ENCODE measurements at regions of chr3 and their contacts with region 1.

Region 1: DNA sequence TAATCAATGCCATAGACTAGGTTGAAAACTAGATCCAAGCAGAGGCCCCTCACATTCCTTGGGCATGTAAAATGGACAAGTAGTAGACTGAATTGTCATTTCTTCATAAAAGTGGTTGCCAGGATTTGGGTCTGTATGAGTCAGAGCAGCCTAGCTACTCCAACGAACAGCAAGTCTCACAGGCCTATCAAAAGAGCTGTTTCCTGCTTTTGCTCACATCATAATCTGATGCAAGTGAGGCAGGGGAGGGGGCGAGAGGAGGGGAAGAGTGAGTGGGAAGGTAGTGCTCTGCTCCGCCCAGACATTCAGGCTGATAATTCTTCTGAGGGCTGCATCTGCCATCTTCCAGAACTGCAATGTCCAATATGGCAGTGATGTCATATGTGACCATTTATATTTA is 228.9 kb upstream of the PRICKLE2 start:
- DNase-seq: no peak
- ATAC-seq: peak; percentile 23; the same call in 2 of the 3 replicates
- H3K4me3 ChIP-seq: no peak overlapping the region
- H3K27ac ChIP-seq: no peak overlapping the region
- H3K4me1 ChIP-seq: peaks cover 4% of the 10 kb centered on the region; the same call in 1 of the 2 replicates
- H3K27me3 ChIP-seq: no peaks in the 10 kb centered on the region
- CTCF ChIP-seq: no peak
- EP300 ChIP-seq: no peak
- POLR2A ChIP-seq: no peak
- RAD21 ChIP-seq: no peak

Region 2: GRCh38 chr3:64251019-64251418 is 203.2 kb before region 1 on chr3:
- CTCF ChIA-PET with region 1: no interaction called
- POLR2A ChIA-PET with region 1: no interaction called
- RAD21 ChIA-PET with region 1: no interaction called
- SMC1A ChIA-PET with region 1: no interaction called
- in situ Hi-C with region 1: no loop called
- intact Hi-C with region 1: no loop called
- DNase-seq: no peak
- ATAC-seq: no peak
- H3K4me3 ChIP-seq: no peak overlapping the region
- H3K27ac ChIP-seq: no peak overlapping the region
- H3K4me1 ChIP-seq: no peaks in the 10 kb centered on the region
- H3K27me3 ChIP-seq: no peaks in the 10 kb centered on the region
- CTCF ChIP-seq: no peak
- EP300 ChIP-seq: no peak
- POLR2A ChIP-seq: no peak
- RAD21 ChIP-seq: no peak

Region 3: GRCh38 chr3:64365877-64366276 is 88.3 kb before region 1 on chr3:
- CTCF ChIA-PET with region 1: no interaction called
- POLR2A ChIA-PET with region 1: no interaction called
- RAD21 ChIA-PET with region 1: no interaction called
- SMC1A ChIA-PET with region 1: no interaction called
- in situ Hi-C with region 1: no loop called
- intact Hi-C with region 1: no loop called
- DNase-seq: no peak
- ATAC-seq: no peak
- H3K4me3 ChIP-seq: no peak overlapping the region
- H3K27ac ChIP-seq: no peak overlapping the region
- H3K4me1 ChIP-seq: no peaks in the 10 kb centered on the region
- H3K27me3 ChIP-seq: no peaks in the 10 kb centered on the region
- CTCF ChIP-seq: no peak
- EP300 ChIP-seq: no peak
- POLR2A ChIP-seq: no peak
- RAD21 ChIP-seq: no peak

Region 4: DNA sequence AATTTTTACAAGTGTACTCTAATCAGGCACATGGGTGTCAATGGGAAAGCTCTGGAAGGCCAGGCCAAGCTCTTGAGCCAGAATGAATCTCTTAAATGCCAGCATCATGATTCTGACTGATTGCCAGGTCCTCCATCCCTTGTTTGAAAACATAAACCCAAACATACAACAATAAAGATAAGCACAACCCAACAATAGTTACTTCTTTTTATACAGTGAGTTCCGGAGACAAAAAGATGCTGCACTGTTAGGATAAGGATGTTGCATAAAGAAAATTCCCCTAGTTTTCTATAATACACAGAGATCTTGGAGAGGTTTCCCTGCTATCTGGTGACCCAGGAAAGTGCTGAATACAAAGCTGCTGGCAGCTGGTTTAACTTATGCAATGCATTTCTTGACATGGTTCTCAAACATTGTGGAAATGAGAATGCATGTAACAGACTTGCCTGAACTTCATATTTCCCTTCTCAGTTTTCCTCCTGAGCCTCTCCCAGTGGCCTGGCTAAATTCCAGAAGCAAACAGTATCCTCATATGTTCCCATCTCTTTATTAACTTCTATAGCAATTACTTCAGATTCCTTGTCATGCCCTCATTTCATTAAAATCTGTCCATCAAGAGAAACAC is 48.9 kb before region 1 on chr3:
- CTCF ChIA-PET with region 1: interaction called, 9 read pairs
- POLR2A ChIA-PET with region 1: interaction called, 5 read pairs
- RAD21 ChIA-PET with region 1: interaction called, 8 read pairs
- SMC1A ChIA-PET with region 1: interaction called, 13 read pairs
- in situ Hi-C with region 1: no loop called
- intact Hi-C with region 1: no loop called
- DNase-seq: no peak
- ATAC-seq: no peak
- H3K4me3 ChIP-seq: no peak overlapping the region
- H3K27ac ChIP-seq: no peak overlapping the region
- H3K4me1 ChIP-seq: no peaks in the 10 kb centered on the region
- H3K27me3 ChIP-seq: no peaks in the 10 kb centered on the region
- CTCF ChIP-seq: no peak
- EP300 ChIP-seq: no peak
- POLR2A ChIP-seq: no peak
- RAD21 ChIP-seq: no peak

Region 5: DNA sequence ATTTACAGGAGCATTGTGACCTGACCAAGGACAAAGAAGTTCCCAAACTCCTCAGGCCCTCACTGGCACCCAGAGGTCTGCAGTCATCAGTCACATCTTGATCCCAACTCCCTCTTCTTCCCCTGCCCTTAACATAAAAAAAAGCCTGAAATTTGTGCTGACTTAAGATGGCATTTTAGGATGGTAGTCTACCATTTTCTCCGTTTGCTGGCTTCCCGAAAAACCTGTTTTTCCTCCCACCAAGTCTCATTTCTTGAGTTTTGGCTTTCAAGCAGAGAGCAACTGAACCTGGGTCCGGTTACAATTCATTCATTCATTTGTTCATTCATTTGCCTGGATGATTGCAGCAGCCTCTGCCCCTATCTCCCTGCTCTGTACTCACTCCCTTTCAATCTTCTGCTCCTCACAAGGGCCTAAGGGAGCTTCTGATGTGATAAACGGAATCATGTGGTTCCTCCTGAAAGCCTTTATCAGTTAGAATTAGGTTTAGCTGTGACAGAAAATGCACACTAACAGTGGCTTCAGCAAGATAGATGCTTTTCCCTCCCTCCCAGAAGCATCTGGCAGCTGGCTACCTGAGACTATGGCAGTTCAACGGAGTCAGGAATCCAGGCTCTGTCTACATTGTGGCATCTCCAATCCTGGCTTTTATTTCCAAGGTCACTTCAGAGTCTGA is 37.5 kb after region 1 on chr3:
- CTCF ChIA-PET with region 1: no interaction called
- POLR2A ChIA-PET with region 1: no interaction called
- RAD21 ChIA-PET with region 1: no interaction called
- SMC1A ChIA-PET with region 1: no interaction called
- in situ Hi-C with region 1: no loop called
- intact Hi-C with region 1: no loop called
- DNase-seq: no peak
- ATAC-seq: no peak
- H3K4me3 ChIP-seq: no peak overlapping the region
- H3K27ac ChIP-seq: no peak overlapping the region
- H3K4me1 ChIP-seq: no peaks in the 10 kb centered on the region
- H3K27me3 ChIP-seq: peaks cover 5 to 13% of the 10 kb centered on the region in 2 experiments
- CTCF ChIP-seq: no peak
- EP300 ChIP-seq: no peak
- POLR2A ChIP-seq: no peak
- RAD21 ChIP-seq: no peak

Region 6: DNA sequence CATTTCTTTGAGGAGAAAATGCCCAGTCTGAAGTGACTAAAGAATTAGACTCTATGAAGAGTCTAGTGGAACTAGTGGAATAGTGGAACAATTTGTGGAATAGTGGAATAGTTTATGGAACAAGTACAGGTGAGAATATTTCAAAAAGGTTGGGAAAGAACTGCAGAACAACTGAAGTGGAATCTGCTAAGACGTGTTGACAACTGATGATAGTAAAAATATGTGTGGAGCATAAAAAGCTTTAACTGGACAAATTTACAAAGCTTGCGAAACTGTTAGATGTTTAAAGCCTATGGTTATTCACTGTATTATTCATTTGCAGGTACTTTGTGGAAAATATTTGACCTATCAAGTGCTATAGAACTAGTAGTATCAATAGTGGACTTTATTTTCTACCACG is 69.1 kb after region 1 on chr3:
- CTCF ChIA-PET with region 1: no interaction called
- POLR2A ChIA-PET with region 1: no interaction called
- RAD21 ChIA-PET with region 1: no interaction called
- SMC1A ChIA-PET with region 1: no interaction called
- in situ Hi-C with region 1: no loop called
- intact Hi-C with region 1: no loop called
- DNase-seq: no peak
- ATAC-seq: no peak
- H3K4me3 ChIP-seq: no peak overlapping the region
- H3K27ac ChIP-seq: no peak overlapping the region
- H3K4me1 ChIP-seq: no peaks in the 10 kb centered on the region
- H3K27me3 ChIP-seq: no peaks in the 10 kb centered on the region
- CTCF ChIP-seq: no peak
- EP300 ChIP-seq: no peak
- POLR2A ChIP-seq: no peak
- RAD21 ChIP-seq: no peak